ENCODE measurements at regions of chr5 and their contacts with region 1.

Region 1: DNA sequence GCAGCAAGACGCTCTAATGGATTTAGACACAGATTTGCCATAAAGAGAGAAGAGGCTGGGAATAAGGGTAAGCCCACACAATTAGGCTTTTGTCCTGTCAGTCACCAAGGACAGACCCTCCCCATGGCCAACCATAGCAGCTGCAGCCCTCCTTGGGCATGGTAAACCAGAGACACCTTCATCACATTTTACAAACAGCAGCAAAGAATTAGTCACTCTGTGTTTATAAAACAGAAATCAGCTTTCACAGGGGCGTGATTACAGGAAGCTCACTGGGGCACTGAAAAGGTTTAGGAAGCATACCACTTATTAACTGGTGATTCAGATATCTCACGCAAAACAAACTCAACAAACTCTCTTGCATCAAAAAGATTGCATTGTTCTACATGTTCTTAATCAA is 37.3 kb upstream of the ZNF622 start:
- DNase-seq: no peak

Region 2: DNA sequence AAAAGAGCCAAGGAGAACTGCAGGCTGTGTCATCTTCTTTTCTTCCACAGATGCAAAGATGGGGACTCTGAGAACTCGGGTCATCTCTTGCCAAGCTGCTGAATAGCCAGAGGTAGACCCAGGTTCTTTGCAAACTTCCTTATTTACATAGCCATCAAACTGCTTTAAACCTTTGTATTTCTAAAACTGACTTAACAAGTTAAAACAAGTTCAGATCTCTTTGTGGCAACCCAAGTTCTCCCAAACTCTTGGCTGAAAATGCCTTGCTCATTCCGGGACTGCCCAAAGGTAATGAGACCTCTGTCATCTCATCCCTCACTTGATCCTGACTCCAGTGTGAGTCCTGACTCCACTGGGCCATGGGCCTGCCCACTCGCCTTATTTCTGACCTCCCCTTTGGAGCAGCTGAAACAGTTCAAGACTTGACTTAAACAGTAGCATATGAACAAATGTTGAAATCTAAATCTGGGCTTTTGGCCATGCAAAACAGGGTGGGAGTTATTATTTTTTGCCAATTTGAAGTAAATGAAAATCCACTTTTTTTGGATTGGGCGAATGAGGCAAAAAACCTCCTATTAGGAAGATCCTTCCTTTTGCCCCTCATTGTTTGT is 952.3 kb before region 1 on chr5:
- intact Hi-C with region 1: no loop called
- DNase-seq: no peak

Region 3: GRCh38 chr5:17455942-17456341 is 953.1 kb after region 1 on chr5:
- intact Hi-C with region 1: loop called in 1 of 2 experiments (anchors 5 kb)
- DNase-seq: no peak

Measured in posterior vena cava (tissue), 2 donors.